Psoas muscle (tissue), 8 donors: ENCODE measurements at regions of chr19 and their contacts with region 1.

Region 1: GRCh38 chr19:51593969-51594773 is 23.1 kb downstream of the ZNF175 start:
- DNase-seq: peak; percentile 99 to 100
- ATAC-seq: peak; percentile 100
- H3K4me3 ChIP-seq: peak overlapping the region; percentile 81
- H3K27ac ChIP-seq: no peak overlapping the region
- H3K4me1 ChIP-seq: peaks cover 6% of the 10 kb centered on the region
- H3K27me3 ChIP-seq: peaks cover 0 to 8% (median 3%) of the 10 kb centered on the region in 3 donors
- CTCF ChIP-seq: no peak

Region 2: GRCh38 chr19:51108066-51108804 is 485.9 kb before region 1 on chr19 and contains the start of gene CTU1:
- intact Hi-C with region 1: loop called (anchors 2 to 5 kb)
- DNase-seq: peak; percentile 98 to 99
- ATAC-seq: peak; percentile 99 to 100 (median 99)
- H3K4me3 ChIP-seq: peak within 1 kb of the TSS; percentile 85
- H3K27ac ChIP-seq: peak within 1 kb of the TSS; percentile 75
- H3K4me1 ChIP-seq: peaks cover 7% of the 10 kb centered on the region
- H3K27me3 ChIP-seq: peaks cover 0 to 5% (median 0%) of the 10 kb centered on the region in 3 donors
- CTCF ChIP-seq: no peak
- total RNA-seq, gene CTU1: 4.9 to 9.1 (median 6.0) TPM

Region 3: GRCh38 chr19:51564791-51565190 is 29.4 kb before region 1 on chr19:
- intact Hi-C with region 1: loop called in 1 of 2 experiments (anchors 5 kb)
- DNase-seq: no peak
- ATAC-seq: no peak
- H3K4me3 ChIP-seq: no peak overlapping the region
- H3K27ac ChIP-seq: no peak overlapping the region
- H3K4me1 ChIP-seq: no peaks in the 10 kb centered on the region
- H3K27me3 ChIP-seq: peaks cover 0 to 20% (median 18%) of the 10 kb centered on the region in 3 donors
- CTCF ChIP-seq: no peak

Region 4: DNA sequence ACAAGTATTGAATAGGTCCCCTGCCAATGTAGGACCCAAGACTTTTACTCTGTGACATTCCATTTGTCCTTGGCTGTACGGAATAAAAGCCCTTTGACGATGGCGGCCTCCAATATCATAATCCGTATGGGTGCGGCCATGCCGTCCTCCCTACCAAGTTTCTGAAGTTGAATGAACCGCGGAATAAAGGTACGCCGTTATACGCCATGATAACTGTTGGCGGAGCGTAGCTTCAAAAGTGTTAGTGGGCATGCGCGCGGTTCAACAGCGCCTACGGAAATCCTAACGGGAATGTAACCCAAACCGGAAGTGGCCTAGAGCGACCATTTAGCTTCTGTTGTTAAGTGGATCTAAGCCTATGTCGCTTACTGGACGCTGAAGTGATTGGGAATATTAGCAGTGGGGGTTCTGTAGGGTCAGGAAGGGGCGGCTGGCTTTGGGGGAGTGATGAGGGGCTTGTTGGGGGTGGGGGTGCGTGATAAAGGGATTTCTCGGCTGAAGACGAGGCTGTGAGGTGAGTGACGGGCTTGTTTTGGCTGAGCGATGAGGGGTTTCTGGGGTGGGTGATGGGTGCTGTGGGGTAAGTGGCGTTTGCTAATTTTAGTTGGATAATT is 23.1 kb before region 1 on chr19 and contains the start of gene ZNF175:
- intact Hi-C with region 1: loop called (anchors 2 kb)
- DNase-seq: peak; percentile 96 to 97
- ATAC-seq: peak; percentile 99 to 100 (median 99)
- H3K4me3 ChIP-seq: peak within 1 kb of the TSS; percentile 81
- H3K27ac ChIP-seq: peak within 1 kb of the TSS; percentile 72
- H3K4me1 ChIP-seq: peaks cover 11% of the 10 kb centered on the region
- H3K27me3 ChIP-seq: peaks cover 0 to 13% (median 0%) of the 10 kb centered on the region in 3 donors
- CTCF ChIP-seq: no peak
- total RNA-seq, gene ZNF175: 4.4 to 8.9 (median 6.7) TPM

Region 5: GRCh38 chr19:51621178-51621577 is 27.0 kb after region 1 on chr19:
- intact Hi-C with region 1: no loop called
- DNase-seq: no peak
- ATAC-seq: no peak
- H3K4me3 ChIP-seq: no peak overlapping the region
- H3K27ac ChIP-seq: no peak overlapping the region
- H3K4me1 ChIP-seq: no peaks in the 10 kb centered on the region
- H3K27me3 ChIP-seq: no peaks in the 10 kb centered on the region
- CTCF ChIP-seq: no peak